ENCODE measurements at regions of chr1 and their contacts with region 1.

Region 1: DNA sequence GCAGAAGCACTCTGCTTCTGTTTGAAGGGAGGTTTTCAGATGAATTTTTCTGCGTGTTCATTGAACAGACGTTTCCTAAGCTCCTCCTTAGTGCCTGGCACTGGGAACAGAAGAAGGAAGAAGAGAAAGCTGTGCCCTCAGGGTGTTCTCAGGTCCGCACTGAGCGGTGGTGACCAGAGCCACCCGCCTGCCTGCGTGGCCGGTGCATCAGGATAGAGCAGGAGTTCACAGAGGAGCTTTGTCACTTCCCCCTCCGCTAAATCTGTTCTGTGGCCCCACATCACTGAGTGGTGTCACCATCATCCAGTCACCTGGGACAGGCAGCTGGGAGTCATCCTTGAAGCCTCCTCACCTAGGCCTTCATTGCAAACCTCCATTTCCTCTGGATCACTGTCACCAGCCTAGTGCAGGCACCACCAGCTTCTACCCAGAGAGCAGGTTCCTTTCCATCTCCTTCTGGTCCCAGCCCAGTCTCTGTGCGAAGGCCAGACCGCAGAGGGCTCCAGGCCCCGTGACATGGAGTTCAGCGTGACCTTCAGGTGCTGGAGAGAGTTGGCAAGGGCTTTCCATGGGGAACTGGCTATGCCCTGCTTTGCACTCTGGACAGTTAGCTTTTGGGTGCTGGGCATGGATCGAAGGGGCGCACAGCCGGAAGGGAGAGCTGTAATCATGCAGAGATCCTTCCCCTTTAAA is 21.7 kb downstream of the PARK7 start:
- DNase-seq: no peak
- H3K4me3 Mint-ChIP-seq: no peak overlapping the region
- H3K27ac Mint-ChIP-seq: no peak overlapping the region
- H3K4me1 Mint-ChIP-seq: no peaks in the 10 kb centered on the region
- H3K27me3 Mint-ChIP-seq: no peaks in the 10 kb centered on the region
- CTCF ChIP-seq: no peak

Region 2: GRCh38 chr1:8348777-8349491 is 365.7 kb after region 1 on chr1:
- CTCF ChIA-PET with region 1: no interaction called
- intact Hi-C with region 1: loop called (anchors 2 kb)
- DNase-seq: peak; percentile 67
- H3K4me3 Mint-ChIP-seq: peak overlapping the region; percentile 10
- H3K27ac Mint-ChIP-seq: no peak overlapping the region
- H3K4me1 Mint-ChIP-seq: peaks cover 8% of the 10 kb centered on the region
- H3K27me3 Mint-ChIP-seq: no peaks in the 10 kb centered on the region
- CTCF ChIP-seq: peak; percentile 67

Measured in Calu3 (cell line).